Calu3 (cell line): ENCODE measurements at regions of chr17 and their contacts with region 1.

Region 1: GRCh38 chr17:43338886-43339516 is 59.8 kb upstream of the ARL4D start:
- DNase-seq: peak; percentile 91
- H3K4me3 Mint-ChIP-seq: no peak overlapping the region
- H3K27ac Mint-ChIP-seq: no peak overlapping the region
- H3K4me1 Mint-ChIP-seq: peaks cover 35% of the 10 kb centered on the region
- H3K27me3 Mint-ChIP-seq: peaks cover 33% of the 10 kb centered on the region
- CTCF ChIP-seq: peak; percentile 90

Region 2: GRCh38 chr17:43360739-43361505 is 21.9 kb after region 1 on chr17:
- CTCF ChIA-PET with region 1: interaction called, 18 read pairs
- intact Hi-C with region 1: no loop called
- DNase-seq: peak; percentile 95
- H3K4me3 Mint-ChIP-seq: peak overlapping the region; percentile 72
- H3K27ac Mint-ChIP-seq: peak overlapping the region; percentile 100
- H3K4me1 Mint-ChIP-seq: peaks cover 42% of the 10 kb centered on the region
- H3K27me3 Mint-ChIP-seq: peaks cover 13% of the 10 kb centered on the region
- CTCF ChIP-seq: no peak